Activated CD4-positive, alpha-beta memory T cell treated with anti-CD3 and anti-CD28 coated beads, Interleukin-2, amount 10 ng/mL, durations not matched to agents 7 days and 5 days (primary cell): ENCODE measurements at regions of chr2 and their contacts with region 1.

Region 1: GRCh38 chr2:241877989-241878970 is 8.8 kb downstream of the RTP5 start:
- DNase-seq: peak; percentile 82
- H3K4me3 Mint-ChIP-seq: no peak overlapping the region
- H3K27ac Mint-ChIP-seq: no peak overlapping the region
- H3K4me1 Mint-ChIP-seq: peaks cover 37% of the 10 kb centered on the region
- H3K27me3 Mint-ChIP-seq: no peaks in the 10 kb centered on the region

Region 2: DNA sequence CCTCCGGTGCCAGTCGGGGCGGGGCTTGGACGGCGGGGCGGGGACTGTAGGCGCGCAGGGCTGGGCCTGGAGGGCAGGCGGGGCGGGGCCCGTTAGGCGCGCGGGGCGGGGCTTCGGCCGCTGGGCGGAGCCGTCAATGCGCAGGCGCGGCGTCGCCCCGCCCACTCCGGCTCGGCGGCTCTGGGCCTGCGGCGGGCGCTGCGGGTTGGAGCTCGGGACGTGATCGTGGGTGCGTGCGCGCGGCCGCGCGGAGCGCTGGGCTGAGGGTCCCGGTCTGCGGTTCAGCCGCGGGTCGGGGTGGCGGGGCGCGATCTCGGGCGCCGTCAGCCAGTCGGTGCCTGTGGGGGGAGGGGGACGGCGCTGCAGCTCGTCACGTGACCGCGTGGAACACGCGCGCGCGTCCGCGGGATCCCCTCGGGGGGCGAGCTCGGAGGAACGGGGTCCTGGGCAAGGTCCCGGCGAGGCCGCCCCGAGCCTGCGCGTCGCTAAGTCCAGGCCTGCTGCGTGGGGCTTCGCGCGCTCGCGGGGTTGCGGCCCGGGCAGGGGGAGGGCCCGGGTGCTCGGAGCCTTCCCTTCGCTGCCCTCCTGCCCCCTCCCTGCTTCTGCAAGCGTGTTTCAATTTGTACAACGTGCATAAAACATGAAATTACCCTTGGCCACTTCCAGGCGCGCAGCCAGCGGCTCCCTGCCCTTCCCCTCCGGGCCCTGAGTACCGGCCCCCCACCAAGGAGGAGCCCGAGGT is 143.6 kb before region 1 on chr2 and contains the start of gene D2HGDH:
- CTCF ChIA-PET with region 1: interaction called, 14 read pairs
- POLR2A ChIA-PET with region 1: interaction called, 10 read pairs
- DNase-seq: peak; percentile 95
- H3K4me3 Mint-ChIP-seq: peak within 1 kb of the TSS; percentile 80
- H3K27ac Mint-ChIP-seq: peak within 1 kb of the TSS; percentile 68
- H3K4me1 Mint-ChIP-seq: peaks cover 61% of the 10 kb centered on the region
- H3K27me3 Mint-ChIP-seq: peaks cover 1% of the 10 kb centered on the region
- total RNA-seq, gene D2HGDH: 24.6 to 25.0 TPM

Region 3: GRCh38 chr2:241867776-241868420 is 10.4 kb before region 1 on chr2:
- CTCF ChIA-PET with region 1: interaction called, 11 read pairs
- POLR2A ChIA-PET with region 1: no interaction called
- DNase-seq: peak; percentile 48
- H3K4me3 Mint-ChIP-seq: no peak overlapping the region
- H3K27ac Mint-ChIP-seq: no peak overlapping the region
- H3K4me1 Mint-ChIP-seq: peaks cover 64% of the 10 kb centered on the region
- H3K27me3 Mint-ChIP-seq: peaks cover 25% of the 10 kb centered on the region